Dorsolateral prefrontal cortex (tissue), 120 donors: ENCODE measurements at regions of chr2 and their contacts with region 1.

Region 1: GRCh38 chr2:12716282-12717190 is at the start of gene TRIB2:
- DNase-seq: peak; percentile 76 to 91 (median 86)
- H3K4me3 ChIP-seq: peak within 1 kb of the TSS; percentile 48 to 93 (median 84)
- H3K27ac ChIP-seq: peak within 1 kb of the TSS; percentile 78 to 98 (median 94)
- H3K27me3 ChIP-seq: no peaks in the 10 kb centered on the region
- CTCF ChIP-seq: peak in 34 of 56 donors; percentile 1 to 59 (median 20)
- total RNA-seq, gene TRIB2: 21.5 to 86.6 (median 38.2) TPM

Region 2: GRCh38 chr2:11829947-11830707 is 886.4 kb before region 1 on chr2:
- intact Hi-C with region 1: loop called (anchors 2 to 10 kb)
- DNase-seq: peak; percentile 29 to 82 (median 72)
- H3K4me3 ChIP-seq: peak overlapping the region; percentile 0 to 64 (median 38)
- H3K27ac ChIP-seq: peak overlapping the region in 51 of 59 donors; percentile 1 to 89 (median 71)
- H3K27me3 ChIP-seq: no peaks in the 10 kb centered on the region
- CTCF ChIP-seq: peak in 34 of 56 donors; percentile 3 to 53 (median 38)

Region 3: DNA sequence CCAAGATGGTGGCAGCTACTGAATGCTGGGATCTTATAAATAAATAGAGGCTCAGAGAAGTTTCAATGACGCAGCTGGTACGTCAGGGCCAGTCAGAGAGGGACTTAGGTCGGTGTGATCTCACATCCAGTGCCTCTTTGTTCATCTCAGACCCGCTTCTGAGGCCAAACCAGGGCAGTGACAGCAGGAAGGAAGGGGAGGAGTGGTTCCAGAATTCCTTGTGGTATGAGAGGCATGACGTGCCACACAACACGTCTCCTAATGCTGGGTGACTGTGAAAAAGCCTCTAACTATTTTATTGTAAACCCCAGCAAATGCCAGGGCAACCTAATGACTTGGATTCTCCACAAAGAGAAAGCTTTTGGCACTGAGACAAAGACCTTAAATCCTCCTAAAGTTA is 546.8 kb before region 1 on chr2:
- intact Hi-C with region 1: loop called (anchors 5 kb)
- DNase-seq: peak in 3 of 10 donors; percentile 12 to 32 (median 25)
- H3K4me3 ChIP-seq: no peak overlapping the region
- H3K27ac ChIP-seq: peak overlapping the region in 49 of 59 donors; percentile 4 to 87 (median 68)
- H3K27me3 ChIP-seq: peaks cover 0 to 4% (median 0%) of the 10 kb centered on the region in 45 donors
- CTCF ChIP-seq: no peak

Region 4: GRCh38 chr2:12663306-12664037 is 53.1 kb before region 1 on chr2:
- intact Hi-C with region 1: no loop called
- DNase-seq: no peak
- H3K4me3 ChIP-seq: no peak overlapping the region
- H3K27ac ChIP-seq: peak overlapping the region in 24 of 59 donors; percentile 2 to 70 (median 43)
- H3K27me3 ChIP-seq: no peaks in the 10 kb centered on the region
- CTCF ChIP-seq: no peak

Region 5: DNA sequence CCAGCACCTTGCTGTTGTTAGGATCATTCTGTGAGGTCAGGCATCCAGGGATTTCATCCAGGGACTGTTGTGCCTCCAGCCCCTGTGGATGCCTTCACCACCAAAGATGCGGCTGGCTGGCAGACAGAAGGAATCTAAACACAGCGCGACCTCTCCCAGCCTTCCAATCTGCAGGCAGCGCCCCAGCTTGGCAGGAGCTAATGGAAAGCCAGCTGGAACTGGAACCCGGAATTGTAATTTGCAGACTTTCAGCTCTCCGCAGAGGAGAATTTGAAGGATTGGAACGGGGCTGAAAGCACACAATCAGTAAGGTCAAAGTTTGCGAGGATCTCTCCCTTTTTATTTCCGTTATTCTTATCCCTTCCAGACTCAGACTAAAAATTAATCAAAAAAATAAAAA is 128.0 kb after region 1 on chr2:
- intact Hi-C with region 1: loop called in 1 of 2 experiments (anchors 5 kb)
- DNase-seq: no peak
- H3K4me3 ChIP-seq: peak overlapping the region in 3 of 59 donors; percentile 6 to 15 (median 12)
- H3K27ac ChIP-seq: peak overlapping the region in 1 of 59 donors; percentile 7
- H3K27me3 ChIP-seq: peaks cover 0 to 8% (median 0%) of the 10 kb centered on the region in 45 donors
- CTCF ChIP-seq: no peak

Region 6: DNA sequence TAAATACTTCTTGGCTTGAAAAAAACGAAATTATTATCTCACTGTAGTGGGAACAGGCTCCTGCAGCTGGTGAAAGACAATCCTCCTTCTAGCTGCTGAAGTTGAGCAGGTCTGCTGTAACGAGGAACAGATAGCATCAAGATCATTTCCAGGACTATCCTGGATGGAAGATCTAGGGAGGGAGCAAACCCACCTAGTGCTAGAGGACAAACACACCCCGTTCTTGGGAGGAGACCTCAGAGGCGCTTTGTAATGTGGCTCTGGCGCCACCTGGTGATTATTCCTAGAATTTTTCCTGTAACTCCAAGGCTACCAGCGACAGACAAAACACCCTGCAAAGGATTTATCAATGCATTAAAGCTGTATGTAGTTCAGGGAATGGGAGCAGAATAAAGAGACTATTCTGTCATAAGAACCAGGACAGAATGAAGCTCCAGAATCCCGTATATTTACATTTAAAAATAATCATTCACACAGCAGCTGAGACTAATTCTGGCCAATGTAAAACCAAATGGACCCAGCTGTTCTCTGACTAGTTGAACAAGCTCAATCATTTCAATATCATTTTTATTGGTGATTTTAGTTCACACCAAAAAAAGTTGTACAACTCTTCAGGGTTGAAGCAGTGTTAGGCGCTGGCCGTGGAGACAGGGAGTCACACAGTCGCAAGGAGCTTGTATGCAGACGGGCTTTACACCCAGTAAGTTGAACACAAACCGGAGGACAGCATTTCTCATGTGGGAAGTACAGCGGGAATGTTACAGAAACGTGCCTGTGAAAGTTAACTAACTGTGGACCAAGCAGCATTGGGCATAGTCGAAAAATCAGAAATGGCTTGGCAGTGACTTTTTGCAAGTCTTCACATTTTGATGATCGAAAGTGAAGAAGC is 290.5 kb after region 1 on chr2:
- intact Hi-C with region 1: loop called (anchors 2 to 5 kb)
- DNase-seq: peak in 8 of 10 donors; percentile 22 to 74 (median 52)
- H3K4me3 ChIP-seq: peak overlapping the region in 52 of 59 donors; percentile 6 to 59 (median 36)
- H3K27ac ChIP-seq: peak overlapping the region in 15 of 59 donors; percentile 6 to 53 (median 31)
- H3K27me3 ChIP-seq: peaks cover 0 to 7% (median 0%) of the 10 kb centered on the region in 45 donors
- CTCF ChIP-seq: peak; percentile 76 to 98 (median 90)